ENCODE measurements at regions of chr21 and their contacts with region 1.

Region 1: GRCh38 chr21:31558962-31559367 is 100.5 kb upstream of the SOD1 start:
- DNase-seq: peak; percentile 97
- ATAC-seq: peak; percentile 88
- H3K4me3 Mint-ChIP-seq: peak overlapping the region; percentile 80
- H3K27ac Mint-ChIP-seq: no peak overlapping the region
- H3K4me1 Mint-ChIP-seq: peaks cover 34% of the 10 kb centered on the region
- H3K27me3 Mint-ChIP-seq: peaks cover 24% of the 10 kb centered on the region

Region 2: GRCh38 chr21:31180256-31181081 is 378.5 kb before region 1 on chr21:
- CTCF ChIA-PET with region 1: interaction called, 6 read pairs
- POLR2A ChIA-PET with region 1: interaction called, 4 read pairs
- intact Hi-C with region 1: loop called (anchors 1 to 5 kb)
- DNase-seq: peak; percentile 48
- ATAC-seq: no peak
- H3K4me3 Mint-ChIP-seq: peak overlapping the region; percentile 91
- H3K27ac Mint-ChIP-seq: peak overlapping the region; percentile 99
- H3K4me1 Mint-ChIP-seq: peaks cover 77% of the 10 kb centered on the region
- H3K27me3 Mint-ChIP-seq: no peaks in the 10 kb centered on the region

Region 3: DNA sequence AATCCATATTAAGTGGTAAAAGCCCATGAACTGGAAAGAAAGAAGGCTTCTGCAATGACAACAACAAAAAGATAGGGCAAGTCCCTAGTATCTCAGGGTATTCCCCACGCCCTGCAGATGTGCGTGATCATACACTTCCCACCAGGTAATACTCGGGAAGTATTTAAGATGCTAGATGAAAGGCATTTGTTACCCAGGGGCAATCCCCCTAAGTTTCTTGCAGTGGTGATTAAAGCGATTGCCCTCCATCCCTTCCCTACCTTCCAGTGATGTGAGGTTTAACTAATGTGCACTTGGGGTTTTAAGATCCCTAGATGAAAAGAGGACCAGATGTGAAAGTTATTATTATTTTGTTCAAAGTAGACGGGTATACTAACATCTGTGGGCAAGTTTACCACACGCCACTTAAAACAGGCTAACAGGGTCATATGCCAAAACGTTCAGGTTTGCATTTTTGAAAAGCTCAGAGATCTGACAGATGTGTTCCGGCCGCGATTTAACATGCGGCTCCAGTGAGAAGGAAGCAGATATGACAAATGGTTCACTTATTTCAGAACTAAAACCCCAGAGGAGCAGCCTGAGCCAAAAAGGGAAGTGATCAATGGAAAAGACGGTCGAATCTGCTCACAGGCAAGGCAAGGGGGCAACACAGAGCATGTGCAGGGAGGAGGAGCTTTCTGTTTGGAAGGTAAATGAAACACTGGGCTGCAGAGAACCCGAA is 232.3 kb before region 1 on chr21:
- CTCF ChIA-PET with region 1: interaction called, 4 read pairs
- POLR2A ChIA-PET with region 1: interaction called, 7 read pairs
- intact Hi-C with region 1: loop called in 1 of 2 experiments (anchors 1 kb)
- DNase-seq: peak; percentile 80
- ATAC-seq: peak; percentile 93
- H3K4me3 Mint-ChIP-seq: peak overlapping the region; percentile 28
- H3K27ac Mint-ChIP-seq: peak overlapping the region; percentile 89
- H3K4me1 Mint-ChIP-seq: peaks cover 32% of the 10 kb centered on the region
- H3K27me3 Mint-ChIP-seq: no peaks in the 10 kb centered on the region

Region 4: DNA sequence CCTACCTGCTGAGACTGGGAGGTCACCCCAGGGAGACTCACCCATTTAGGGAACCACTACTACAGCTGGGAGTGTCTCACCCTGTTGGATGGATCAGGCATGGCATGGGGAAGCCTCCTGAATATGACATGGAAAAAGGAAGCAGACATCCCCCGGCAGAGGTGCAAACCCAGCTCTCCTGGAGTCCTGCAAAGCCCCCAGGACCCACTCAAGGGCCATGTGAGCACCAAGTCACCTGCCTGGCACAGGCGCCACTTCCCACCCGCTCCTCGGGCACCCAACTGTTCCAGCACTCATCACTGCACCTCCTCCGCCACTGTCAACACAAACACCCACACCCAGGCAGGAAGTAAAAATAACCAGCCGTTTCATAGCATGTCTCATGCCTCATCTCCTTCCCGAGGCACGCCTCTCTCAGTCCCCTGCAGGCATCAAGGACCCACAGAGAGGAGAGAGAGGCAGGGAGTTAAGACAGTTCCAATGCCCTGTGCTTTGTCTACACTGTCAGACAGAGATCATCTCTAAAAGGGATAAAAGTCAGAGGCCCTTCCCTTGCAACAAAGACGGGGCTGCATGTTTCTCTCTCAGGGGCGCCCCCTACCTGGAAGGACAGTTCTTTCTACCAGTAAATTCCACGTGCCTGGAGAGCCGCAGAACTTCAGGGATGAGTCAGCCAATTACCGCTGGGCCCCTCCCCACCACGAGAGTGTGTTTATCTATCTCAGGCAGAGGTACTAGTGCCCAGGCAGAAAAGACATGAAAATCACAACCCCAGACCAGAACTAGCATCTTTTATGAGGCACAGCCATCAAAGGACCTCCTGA is 49.6 kb before region 1 on chr21:
- CTCF ChIA-PET with region 1: interaction called, 6 read pairs
- POLR2A ChIA-PET with region 1: no interaction called
- intact Hi-C with region 1: loop called (anchors 1 to 2 kb)
- DNase-seq: peak; percentile 93
- ATAC-seq: peak; percentile 91
- H3K4me3 Mint-ChIP-seq: peak overlapping the region; percentile 49
- H3K27ac Mint-ChIP-seq: peak overlapping the region; percentile 78
- H3K4me1 Mint-ChIP-seq: peaks cover 34% of the 10 kb centered on the region
- H3K27me3 Mint-ChIP-seq: peaks cover 2% of the 10 kb centered on the region

Region 5: GRCh38 chr21:31659536-31660258 is 100.7 kb after region 1 on chr21 and contains the start of gene SOD1:
- CTCF ChIA-PET with region 1: no interaction called
- POLR2A ChIA-PET with region 1: no interaction called
- intact Hi-C with region 1: loop called (anchors 1 to 5 kb)
- DNase-seq: peak; percentile 97
- ATAC-seq: peak; percentile 93
- H3K4me3 Mint-ChIP-seq: peak within 1 kb of the TSS; percentile 88
- H3K27ac Mint-ChIP-seq: peak within 1 kb of the TSS; percentile 99
- H3K4me1 Mint-ChIP-seq: peaks cover 68% of the 10 kb centered on the region
- H3K27me3 Mint-ChIP-seq: no peaks in the 10 kb centered on the region
- total RNA-seq, gene SOD1: 232 to 284 TPM

Measured in activated CD4-positive, alpha-beta T cell treated with anti-CD3 and anti-CD28 coated beads for 36 hours (primary cell).